PC-3 (cell line): ENCODE measurements at regions of chr1 and their contacts with region 1.

Region 1: GRCh38 chr1:168572633-168573032 is 3.8 kb upstream of the XCL1 start:
- DNase-seq: no peak
- ATAC-seq: no peak
- H3K4me3 ChIP-seq: no peak overlapping the region
- H3K27ac ChIP-seq: no peak overlapping the region
- H3K4me1 ChIP-seq: no peaks in the 10 kb centered on the region
- H3K27me3 ChIP-seq: peaks cover 26% of the 10 kb centered on the region
- CTCF ChIP-seq: no peak

Region 2: GRCh38 chr1:168439456-168440375 is 132.9 kb before region 1 on chr1:
- CTCF ChIA-PET with region 1: no interaction called
- POLR2A ChIA-PET with region 1: no interaction called
- intact Hi-C with region 1: loop called (anchors 1 kb)
- DNase-seq: peak; percentile 96
- ATAC-seq: peak; percentile 94
- H3K4me3 ChIP-seq: peak overlapping the region; percentile 57
- H3K27ac ChIP-seq: no peak overlapping the region
- H3K4me1 ChIP-seq: no peaks in the 10 kb centered on the region
- H3K27me3 ChIP-seq: no peaks in the 10 kb centered on the region
- CTCF ChIP-seq: peak; percentile 96